ENCODE measurements at regions of chr7 and their contacts with region 1.

Region 1: DNA sequence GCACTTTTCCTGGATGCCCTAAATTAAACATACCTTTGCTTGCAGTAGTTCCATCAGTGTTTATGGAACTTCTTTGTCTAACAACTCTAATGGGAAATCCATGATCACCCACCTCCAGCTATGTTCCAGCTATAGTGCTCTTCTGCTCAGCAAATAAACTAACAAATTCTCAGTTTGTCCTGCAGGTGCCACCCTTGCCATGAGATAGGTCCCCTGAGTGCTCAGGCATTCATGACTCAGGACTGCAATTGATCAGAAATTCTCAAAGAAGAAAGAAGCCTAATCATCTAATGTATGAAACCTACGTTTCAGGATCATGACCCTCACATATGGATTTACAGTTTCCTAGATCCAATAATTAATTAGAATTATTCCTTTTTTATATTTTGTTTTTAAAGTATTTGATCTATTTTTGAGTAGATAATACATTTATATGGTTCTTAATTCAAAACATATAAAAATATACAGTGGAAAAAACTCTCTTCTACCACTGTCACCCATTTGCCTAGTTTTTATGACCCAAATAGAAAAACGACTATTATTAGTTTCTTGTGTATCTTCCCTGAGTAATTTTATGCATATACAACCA is 48.7 kb upstream of the DYNC1I1 start:
- DNase-seq: no peak

Region 2: DNA sequence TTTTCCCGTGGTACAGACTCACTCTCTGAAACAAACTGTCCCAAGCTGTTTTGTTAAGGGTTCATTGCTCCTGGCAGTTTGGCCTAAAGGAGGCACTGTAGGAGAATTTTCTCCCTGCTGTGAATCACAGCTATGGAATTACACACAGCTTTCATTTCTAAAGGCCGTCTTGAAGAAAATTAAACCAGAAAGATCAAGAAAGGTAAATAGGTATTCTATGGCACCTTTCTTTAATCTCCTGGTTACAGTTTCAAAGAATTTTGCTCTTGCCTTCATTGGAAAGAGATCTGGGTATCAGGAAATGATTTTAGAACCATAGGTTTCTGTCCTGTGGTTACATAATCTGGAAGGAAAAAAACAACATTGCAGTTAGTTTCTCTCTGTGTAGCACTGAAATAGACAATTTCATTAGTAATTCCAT is 178.6 kb before region 1 on chr7:
- intact Hi-C with region 1: no loop called
- DNase-seq: no peak

Region 3: GRCh38 chr7:95871078-95871782 is 147.5 kb after region 1 on chr7:
- intact Hi-C with region 1: loop called (anchors 1 kb)
- DNase-seq: no peak

Measured in cardiac septum (tissue), 1 donor.